Activated T-helper 1 cell treated with anti-CD3 and anti-CD28 coated beads, Interleukin-12 subunit alpha, Interleukin-12 subunit beta, Interleukin-2, Interleukin-4 antibody, amounts not matched to agents 30 ng/mL and 10 ng/mL and 1 ng/mL, durations not matched to agents 14 hours and 24 hours and 36 hours (primary cell): ENCODE measurements at regions of chr11 and their contacts with region 1.

Region 1: DNA sequence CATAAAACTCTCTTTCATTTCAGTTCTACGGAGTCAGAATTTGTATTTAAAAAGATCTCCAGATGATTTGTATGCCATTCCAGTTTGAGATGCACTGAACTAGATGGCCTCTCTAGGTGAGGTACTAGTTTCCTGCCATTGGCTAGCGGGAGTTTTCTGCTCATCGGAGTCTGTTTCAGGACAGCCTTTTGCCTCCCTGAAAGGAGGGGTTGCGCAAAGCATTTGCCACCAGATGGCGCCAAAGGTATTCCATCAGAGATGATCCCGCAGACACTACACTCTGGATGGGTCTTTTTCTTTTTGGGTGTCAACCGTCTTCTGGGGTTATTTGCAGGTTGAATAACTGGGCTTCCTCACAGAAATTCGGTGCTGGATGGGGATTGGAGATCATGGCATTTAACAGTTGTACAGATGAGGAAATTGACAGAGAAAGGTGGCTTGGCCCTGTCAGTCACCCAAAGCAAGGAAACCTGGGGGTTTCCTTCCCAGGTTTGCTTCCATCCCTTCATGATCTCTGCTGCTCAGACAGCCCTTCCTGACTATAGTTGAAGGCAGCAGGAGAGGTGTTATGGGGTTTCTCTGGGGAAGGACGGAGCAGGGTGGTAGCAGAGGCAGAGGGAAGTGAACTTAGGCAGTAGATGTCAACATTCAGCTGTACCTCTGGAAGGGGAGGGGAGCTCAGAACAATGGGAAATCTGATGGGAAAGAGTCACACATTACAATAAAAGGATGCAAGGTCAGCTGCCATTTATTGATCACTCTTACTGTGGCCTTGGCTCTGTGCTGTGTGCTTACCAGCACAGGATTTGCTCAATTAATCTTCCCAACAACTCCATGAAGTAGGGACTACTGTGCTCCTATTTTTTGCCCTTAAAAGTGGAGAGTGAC is 81.6 kb downstream of the CCDC81 start:
- DNase-seq: peak; percentile 71
- H3K4me3 Mint-ChIP-seq: no peak overlapping the region
- H3K27ac Mint-ChIP-seq: peak overlapping the region; percentile 40
- H3K4me1 Mint-ChIP-seq: peaks cover 75% of the 10 kb centered on the region
- H3K27me3 Mint-ChIP-seq: no peaks in the 10 kb centered on the region

Region 2: GRCh38 chr11:86477495-86478155 is 21.3 kb after region 1 on chr11:
- intact Hi-C with region 1: loop called (anchors 2 kb)
- DNase-seq: no peak
- H3K4me3 Mint-ChIP-seq: no peak overlapping the region
- H3K27ac Mint-ChIP-seq: no peak overlapping the region
- H3K4me1 Mint-ChIP-seq: peaks cover 12% of the 10 kb centered on the region
- H3K27me3 Mint-ChIP-seq: no peaks in the 10 kb centered on the region

Region 3: DNA sequence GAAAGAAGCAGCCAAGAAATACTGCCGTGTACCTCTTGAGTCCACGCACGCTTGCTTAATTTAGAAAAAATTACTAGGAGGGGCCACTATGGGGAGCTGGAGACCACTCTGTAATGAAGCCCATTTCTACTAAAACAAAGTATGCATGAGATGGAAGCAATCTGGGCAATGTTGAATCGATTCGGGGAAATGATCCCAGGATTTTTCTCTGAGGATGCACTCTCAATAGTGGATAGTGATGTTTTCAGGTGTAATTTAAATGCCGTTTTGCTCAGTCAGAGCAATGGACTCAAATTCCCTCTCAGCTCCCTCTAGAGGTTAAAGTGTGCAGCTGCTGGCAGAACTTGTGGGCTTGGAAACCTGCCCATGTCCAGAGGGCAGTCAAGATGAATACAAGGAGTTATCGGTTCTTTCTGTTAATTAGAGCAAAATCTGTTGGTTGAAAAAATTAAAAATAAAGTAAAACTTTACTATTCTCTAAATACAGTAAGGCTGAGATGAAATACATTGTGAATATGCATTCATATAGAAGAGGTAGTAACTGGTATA is 152.0 kb after region 1 on chr11:
- intact Hi-C with region 1: loop called (anchors 1 kb)
- DNase-seq: peak; percentile 22
- H3K4me3 Mint-ChIP-seq: no peak overlapping the region
- H3K27ac Mint-ChIP-seq: no peak overlapping the region
- H3K4me1 Mint-ChIP-seq: peaks cover 30% of the 10 kb centered on the region
- H3K27me3 Mint-ChIP-seq: peaks cover 3% of the 10 kb centered on the region

Region 4: GRCh38 chr11:86818466-86819192 is 362.3 kb after region 1 on chr11:
- intact Hi-C with region 1: loop called (anchors 1 kb)
- DNase-seq: no peak
- H3K4me3 Mint-ChIP-seq: no peak overlapping the region
- H3K27ac Mint-ChIP-seq: no peak overlapping the region
- H3K4me1 Mint-ChIP-seq: peaks cover 31% of the 10 kb centered on the region
- H3K27me3 Mint-ChIP-seq: peaks cover 24% of the 10 kb centered on the region

Region 5: DNA sequence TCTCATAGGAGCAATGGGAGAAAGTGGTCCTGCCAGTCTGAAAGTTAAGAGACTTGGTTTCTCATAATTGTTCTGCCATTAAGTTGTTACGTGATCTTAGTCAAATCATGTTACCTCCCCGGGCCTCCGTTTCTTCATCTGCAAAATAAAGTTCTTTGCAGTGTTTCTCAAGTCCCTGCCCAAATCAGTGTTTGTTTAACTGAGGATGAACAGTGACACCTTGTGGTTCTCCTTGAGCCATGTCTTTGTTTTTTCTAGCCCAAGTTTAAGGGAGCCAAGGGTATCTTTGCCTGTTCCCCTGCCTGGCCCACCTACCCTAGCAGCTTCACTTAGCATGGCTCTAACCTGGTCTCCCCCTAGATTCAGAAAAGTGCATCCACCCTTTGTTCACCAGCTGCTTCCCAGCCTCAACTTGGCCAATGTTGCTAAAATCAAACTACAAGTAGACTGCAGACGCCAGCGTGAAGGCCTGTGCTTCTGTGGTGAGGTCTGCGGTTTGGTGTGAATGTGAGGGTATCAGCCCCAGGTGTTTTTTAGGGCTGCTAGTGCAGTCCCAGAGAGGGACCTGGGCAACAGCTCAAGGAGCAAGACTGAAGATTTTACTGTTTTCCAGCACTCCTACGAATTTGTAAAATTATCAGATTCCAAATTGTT is 463.4 kb after region 1 on chr11:
- intact Hi-C with region 1: loop called (anchors 1 kb)
- DNase-seq: no peak
- H3K4me3 Mint-ChIP-seq: no peak overlapping the region
- H3K27ac Mint-ChIP-seq: no peak overlapping the region
- H3K4me1 Mint-ChIP-seq: peaks cover 6% of the 10 kb centered on the region
- H3K27me3 Mint-ChIP-seq: peaks cover 15% of the 10 kb centered on the region